Colonic mucosa (tissue), 4 donors: ENCODE measurements at regions of chr1 and their contacts with region 1.

Region 1: GRCh38 chr1:26999440-26999987 is 6.0 kb downstream of the TRNP1 start:
- DNase-seq: no peak
- H3K4me3 ChIP-seq: no peak overlapping the region
- H3K27ac ChIP-seq: peak overlapping the region; percentile 15
- H3K4me1 ChIP-seq: no peaks in the 10 kb centered on the region
- H3K27me3 ChIP-seq: peaks cover 21% of the 10 kb centered on the region
- CTCF ChIP-seq: no peak

Region 2: GRCh38 chr1:27037515-27037914 is 38.0 kb after region 1 on chr1:
- intact Hi-C with region 1: loop called (anchors 5 kb)
- DNase-seq: no peak
- H3K4me3 ChIP-seq: no peak overlapping the region
- H3K27ac ChIP-seq: no peak overlapping the region
- H3K4me1 ChIP-seq: no peaks in the 10 kb centered on the region
- H3K27me3 ChIP-seq: no peaks in the 10 kb centered on the region
- CTCF ChIP-seq: no peak

Region 3: DNA sequence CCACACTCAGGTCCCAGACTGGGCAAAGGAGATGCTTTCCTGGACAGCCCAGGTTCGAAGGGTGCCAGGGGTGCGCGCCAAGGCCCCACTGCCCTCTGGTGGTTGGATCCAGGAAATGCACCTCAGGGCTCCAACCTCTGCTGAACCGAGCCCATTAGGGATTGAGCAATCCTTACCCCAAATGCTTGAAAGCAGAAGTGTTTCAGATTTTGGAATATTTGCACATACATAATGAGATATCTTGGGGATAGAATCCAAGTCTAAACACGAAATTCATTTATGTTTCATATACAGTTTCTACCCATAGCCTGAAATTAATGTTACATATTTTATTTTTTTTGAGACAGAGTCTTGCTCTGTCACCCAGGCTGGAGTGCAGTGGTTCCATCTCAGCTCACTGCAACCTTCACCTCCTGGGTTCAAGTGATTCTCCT is 98.0 kb after region 1 on chr1:
- intact Hi-C with region 1: loop called (anchors 2 kb)
- DNase-seq: peak; percentile 84
- H3K4me3 ChIP-seq: no peak overlapping the region
- H3K27ac ChIP-seq: no peak overlapping the region
- H3K4me1 ChIP-seq: no peaks in the 10 kb centered on the region
- H3K27me3 ChIP-seq: no peaks in the 10 kb centered on the region
- CTCF ChIP-seq: peak; percentile 98